Tibial artery (tissue), 4 donors: ENCODE measurements at regions of chr10 and their contacts with region 1.

Region 1: GRCh38 chr10:96831867-96832720 is at the start of gene LCOR:
- DNase-seq: peak; percentile 82 to 91
- H3K4me3 ChIP-seq: peak within 1 kb of the TSS; percentile 99
- H3K27ac ChIP-seq: peak within 1 kb of the TSS; percentile 90 to 97
- H3K4me1 ChIP-seq: peaks cover 0 to 38% (median 15%) of the 10 kb centered on the region in 4 donors
- H3K27me3 ChIP-seq: no peaks in the 10 kb centered on the region
- CTCF ChIP-seq: peak in 1 of 2 experiments; percentile 15

Region 2: DNA sequence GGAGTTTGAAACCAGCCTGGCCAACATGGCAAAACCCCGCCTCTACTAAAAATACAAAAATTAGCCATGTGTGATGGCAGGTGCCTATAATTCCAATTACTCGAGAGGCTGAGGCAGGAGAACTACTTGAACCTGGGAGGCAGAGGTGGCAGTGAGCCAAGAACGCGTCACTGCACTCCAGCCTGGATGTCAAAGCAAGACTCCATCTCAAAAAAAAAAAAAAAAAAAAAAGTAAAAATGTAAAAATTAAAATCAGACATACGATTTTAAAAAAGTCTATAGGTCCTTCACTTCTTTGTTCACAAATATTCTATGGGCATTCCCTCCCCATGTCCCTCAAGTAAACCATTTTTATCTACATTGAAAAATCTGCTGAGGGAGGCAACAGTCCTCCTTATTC is 283.5 kb before region 1 on chr10:
- intact Hi-C with region 1: no loop called
- DNase-seq: no peak
- H3K4me3 ChIP-seq: no peak overlapping the region
- H3K27ac ChIP-seq: no peak overlapping the region
- H3K4me1 ChIP-seq: no peaks in the 10 kb centered on the region
- H3K27me3 ChIP-seq: no peaks in the 10 kb centered on the region
- CTCF ChIP-seq: no peak

Region 3: GRCh38 chr10:96586419-96587263 is 245.5 kb before region 1 on chr10 and contains the start of gene TM9SF3:
- intact Hi-C with region 1: loop called (anchors 5 kb)
- DNase-seq: peak; percentile 94 to 95
- H3K4me3 ChIP-seq: peak within 1 kb of the TSS; percentile 73 to 84
- H3K27ac ChIP-seq: peak within 1 kb of the TSS; percentile 96 to 97
- H3K4me1 ChIP-seq: peaks cover 0 to 53% (median 34%) of the 10 kb centered on the region in 4 donors
- H3K27me3 ChIP-seq: no peaks in the 10 kb centered on the region
- CTCF ChIP-seq: peak; percentile 5 to 9